PC-9 (cell line): ENCODE measurements at regions of chr1 and their contacts with region 1.

Region 1: GRCh38 chr1:19059773-19060172 is 103.3 kb upstream of the IFFO2 start:
- DNase-seq: no peak
- H3K4me3 ChIP-seq: no peak overlapping the region
- H3K27ac ChIP-seq: no peak overlapping the region
- H3K4me1 ChIP-seq: no peaks in the 10 kb centered on the region
- H3K27me3 ChIP-seq: no peaks in the 10 kb centered on the region
- CTCF ChIP-seq: no peak

Region 2: DNA sequence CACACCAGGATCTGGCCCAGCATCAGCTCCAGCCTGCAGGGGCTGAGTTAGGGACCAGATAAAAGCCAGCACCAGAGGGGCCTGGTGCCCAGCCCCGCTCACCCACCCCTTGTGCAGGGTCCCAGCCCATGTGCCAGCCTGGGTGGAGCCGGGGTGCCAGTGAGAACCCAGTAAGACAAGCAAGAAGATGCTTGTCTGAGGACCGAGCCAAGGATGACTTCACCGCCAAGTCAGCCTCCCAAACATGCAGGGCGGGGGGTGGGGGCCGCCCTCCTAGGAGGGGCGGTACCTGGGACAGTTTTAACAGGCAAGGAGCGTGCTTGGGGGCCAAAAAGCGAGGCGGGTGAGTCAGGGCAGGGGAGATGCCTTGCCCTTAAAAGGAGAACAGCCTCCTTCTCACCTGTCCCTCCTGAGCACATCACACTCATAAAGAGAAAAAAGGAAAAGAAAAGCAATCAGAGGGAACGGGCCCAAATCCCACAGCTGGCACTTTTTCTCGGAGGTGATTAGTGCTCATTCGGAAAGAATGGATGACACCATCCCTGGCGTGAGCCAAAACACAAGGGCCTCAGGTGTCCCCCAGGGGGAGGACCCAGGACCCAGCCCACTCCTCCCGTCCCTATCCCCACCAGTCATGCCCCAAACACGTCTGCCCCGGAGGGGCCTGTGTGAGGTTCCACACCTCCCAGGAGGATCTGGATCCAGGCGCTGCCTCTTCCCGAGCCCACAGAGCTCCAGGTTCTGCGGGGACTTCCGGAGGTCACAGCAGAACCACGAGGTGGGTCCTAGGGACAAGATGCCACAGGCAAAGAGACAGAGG is 25.7 kb before region 1 on chr1:
- CTCF ChIA-PET with region 1: interaction called, 16 read pairs
- POLR2A ChIA-PET with region 1: no interaction called
- intact Hi-C with region 1: no loop called
- DNase-seq: peak; percentile 66 to 79
- H3K4me3 ChIP-seq: no peak overlapping the region
- H3K27ac ChIP-seq: no peak overlapping the region
- H3K4me1 ChIP-seq: peaks cover 28% of the 10 kb centered on the region
- H3K27me3 ChIP-seq: no peaks in the 10 kb centered on the region
- CTCF ChIP-seq: no peak